ENCODE measurements at regions of chr1 and their contacts with region 1.

Region 1: GRCh38 chr1:153288634-153289275 is 24.0 kb downstream of the PGLYRP3 start:
- DNase-seq: peak; percentile 83
- ATAC-seq: peak; percentile 97
- H3K4me3 Mint-ChIP-seq: no peak overlapping the region
- H3K27ac Mint-ChIP-seq: no peak overlapping the region
- H3K4me1 Mint-ChIP-seq: peaks cover 16% of the 10 kb centered on the region
- H3K27me3 Mint-ChIP-seq: peaks cover under 1% of the 10 kb centered on the region; the same call in 1 of the 2 replicates
- CTCF ChIP-seq: peak; percentile 81

Region 2: DNA sequence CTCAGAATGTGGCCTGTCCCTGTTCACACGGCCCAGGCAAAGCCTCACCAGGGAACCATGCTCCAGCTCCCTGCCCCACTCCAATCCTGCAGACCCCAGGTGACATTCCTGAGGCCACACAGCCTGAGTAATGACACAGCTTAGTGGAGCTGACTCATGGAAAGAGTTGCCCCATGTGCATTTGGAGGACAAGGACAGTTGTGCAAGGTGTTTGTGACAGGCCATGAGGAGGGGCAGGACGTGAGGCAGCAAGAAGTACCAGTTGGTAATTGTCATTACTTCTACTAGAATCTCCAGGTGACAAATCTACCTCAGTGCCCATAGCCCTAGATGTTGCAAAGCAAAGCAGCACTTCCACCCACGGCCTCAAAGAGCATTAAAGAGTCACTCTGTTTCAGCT is 56.2 kb before region 1 on chr1:
- CTCF ChIA-PET with region 1: interaction called, 30 read pairs
- POLR2A ChIA-PET with region 1: no interaction called
- DNase-seq: no peak
- ATAC-seq: no peak
- H3K4me3 Mint-ChIP-seq: no peak overlapping the region
- H3K27ac Mint-ChIP-seq: no peak overlapping the region
- H3K4me1 Mint-ChIP-seq: no peaks in the 10 kb centered on the region
- H3K27me3 Mint-ChIP-seq: peaks cover 3% of the 10 kb centered on the region; the same call in 1 of the 2 replicates
- CTCF ChIP-seq: no peak

Region 3: GRCh38 chr1:153238536-153238935 is 50.2 kb before region 1 on chr1:
- CTCF ChIA-PET with region 1: interaction called, 30 read pairs
- POLR2A ChIA-PET with region 1: no interaction called
- DNase-seq: no peak
- ATAC-seq: peak; percentile 74
- H3K4me3 Mint-ChIP-seq: no peak overlapping the region
- H3K27ac Mint-ChIP-seq: no peak overlapping the region
- H3K4me1 Mint-ChIP-seq: no peaks in the 10 kb centered on the region
- H3K27me3 Mint-ChIP-seq: no peaks in the 10 kb centered on the region; the same call in 1 of the 2 replicates
- CTCF ChIP-seq: no peak

Region 4: GRCh38 chr1:153261281-153262069 is 27.3 kb before region 1 on chr1:
- CTCF ChIA-PET with region 1: interaction called, 17 read pairs
- POLR2A ChIA-PET with region 1: interaction called, 3 read pairs
- DNase-seq: peak; percentile 66
- ATAC-seq: peak; percentile 74
- H3K4me3 Mint-ChIP-seq: peak overlapping the region; percentile 79
- H3K27ac Mint-ChIP-seq: no peak overlapping the region
- H3K4me1 Mint-ChIP-seq: peaks cover 13% of the 10 kb centered on the region
- H3K27me3 Mint-ChIP-seq: peaks cover 82% of the 10 kb centered on the region
- CTCF ChIP-seq: no peak

Region 5: GRCh38 chr1:153277817-153278216 is 10.9 kb before region 1 on chr1:
- CTCF ChIA-PET with region 1: interaction called, 11 read pairs
- POLR2A ChIA-PET with region 1: no interaction called
- DNase-seq: peak; percentile 78
- ATAC-seq: peak; percentile 96
- H3K4me3 Mint-ChIP-seq: no peak overlapping the region
- H3K27ac Mint-ChIP-seq: no peak overlapping the region
- H3K4me1 Mint-ChIP-seq: peaks cover 12% of the 10 kb centered on the region
- H3K27me3 Mint-ChIP-seq: peaks cover 29% of the 10 kb centered on the region
- CTCF ChIP-seq: peak; percentile 88

Region 6: DNA sequence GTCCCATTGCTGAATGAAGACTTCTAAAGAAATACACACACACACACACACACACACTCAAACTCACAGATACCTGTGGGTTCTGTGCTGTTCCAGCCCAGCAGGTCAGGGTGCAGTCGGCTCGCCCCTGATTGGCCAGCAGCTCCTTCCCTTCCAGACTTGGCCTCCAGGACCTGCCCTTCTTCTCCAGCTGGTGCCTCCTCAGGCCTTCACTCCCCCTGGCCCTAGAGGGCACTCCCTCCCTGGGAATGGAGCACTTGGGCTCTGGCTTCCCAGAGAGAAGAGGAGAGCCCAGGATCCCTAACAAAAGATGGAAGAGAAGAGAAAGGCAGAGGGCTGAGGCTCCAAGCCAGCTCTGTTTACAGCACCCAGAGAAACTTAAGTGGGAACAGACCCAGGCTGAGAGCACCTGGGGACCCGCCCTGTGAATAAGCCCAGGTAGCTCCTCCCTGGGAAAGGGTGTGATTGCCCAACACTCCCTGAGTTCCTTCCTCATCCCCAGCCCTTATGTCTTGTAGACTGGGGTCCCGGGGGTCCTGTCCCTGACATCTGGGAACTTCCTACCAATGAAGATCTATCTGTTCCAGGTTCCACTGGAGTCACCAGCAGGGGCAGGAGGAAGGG is 23.9 kb after region 1 on chr1 and contains the start of gene PGLYRP3:
- CTCF ChIA-PET with region 1: interaction called, 15 read pairs
- POLR2A ChIA-PET with region 1: no interaction called
- DNase-seq: no peak
- ATAC-seq: peak; percentile 95
- H3K4me3 Mint-ChIP-seq: no peak within 1 kb of the TSS
- H3K27ac Mint-ChIP-seq: no peak within 1 kb of the TSS
- H3K4me1 Mint-ChIP-seq: peaks cover 3% of the 10 kb centered on the region; the same call in 1 of the 2 replicates
- H3K27me3 Mint-ChIP-seq: peaks cover 13% of the 10 kb centered on the region
- CTCF ChIP-seq: no peak
- total RNA-seq, gene PGLYRP3: not detected in 3 replicates

Region 7: DNA sequence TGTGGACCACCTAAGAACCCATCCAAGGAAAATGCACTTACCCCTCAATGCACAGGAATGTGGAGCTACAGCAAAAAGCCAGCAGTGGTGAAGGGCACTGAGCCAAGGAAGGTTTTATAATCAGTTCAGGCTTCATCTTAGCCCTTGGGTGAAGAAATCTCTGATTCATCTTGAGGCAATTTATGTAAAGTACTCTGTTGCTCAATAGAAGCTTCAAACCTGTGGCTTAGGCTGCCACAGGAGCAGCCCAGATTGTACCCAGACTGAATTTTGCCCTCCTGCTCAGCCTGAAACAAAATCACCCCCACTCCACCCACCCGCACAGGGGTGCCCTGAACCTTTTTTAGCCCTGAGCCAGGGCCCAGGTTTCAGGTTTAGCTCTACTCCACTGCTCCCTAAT is 86.8 kb after region 1 on chr1 and contains the start of gene S100A12:
- CTCF ChIA-PET with region 1: no interaction called
- POLR2A ChIA-PET with region 1: no interaction called
- DNase-seq: no peak
- ATAC-seq: no peak
- H3K4me3 Mint-ChIP-seq: no peak within 1 kb of the TSS
- H3K27ac Mint-ChIP-seq: no peak within 1 kb of the TSS
- H3K4me1 Mint-ChIP-seq: no peaks in the 10 kb centered on the region
- H3K27me3 Mint-ChIP-seq: peaks cover 14% of the 10 kb centered on the region
- CTCF ChIP-seq: no peak
- total RNA-seq, gene S100A12: not detected in 3 replicates

Measured in WTC11 (cell line).